ENCODE measurements at regions of chr4 and their contacts with region 1.

Region 1: GRCh38 chr4:56799824-56800756 is 21.4 kb downstream of the SPINK2 start:
- DNase-seq: peak; percentile 87 to 90
- H3K4me3 ChIP-seq: peak overlapping the region; percentile 3 to 89 (median 38)
- H3K27ac ChIP-seq: peak overlapping the region; percentile 66 to 83 (median 74)
- H3K4me1 ChIP-seq: peaks cover 0 to 3% of the 10 kb centered on the region in 2 donors
- H3K27me3 ChIP-seq: no peaks in the 10 kb centered on the region
- CTCF ChIP-seq: peak; percentile 58 to 98 (median 90)
- POLR2A ChIP-seq: no peak

Region 2: GRCh38 chr4:56575820-56576429 is 224.2 kb before region 1 on chr4:
- intact Hi-C with region 1: loop called (anchors 5 kb)
- DNase-seq: no peak
- H3K4me3 ChIP-seq: no peak overlapping the region
- H3K27ac ChIP-seq: no peak overlapping the region
- H3K4me1 ChIP-seq: no peaks in the 10 kb centered on the region
- H3K27me3 ChIP-seq: no peaks in the 10 kb centered on the region
- CTCF ChIP-seq: peak in 4 of 6 experiments; percentile 46 to 68 (median 60)
- POLR2A ChIP-seq: no peak

Region 3: DNA sequence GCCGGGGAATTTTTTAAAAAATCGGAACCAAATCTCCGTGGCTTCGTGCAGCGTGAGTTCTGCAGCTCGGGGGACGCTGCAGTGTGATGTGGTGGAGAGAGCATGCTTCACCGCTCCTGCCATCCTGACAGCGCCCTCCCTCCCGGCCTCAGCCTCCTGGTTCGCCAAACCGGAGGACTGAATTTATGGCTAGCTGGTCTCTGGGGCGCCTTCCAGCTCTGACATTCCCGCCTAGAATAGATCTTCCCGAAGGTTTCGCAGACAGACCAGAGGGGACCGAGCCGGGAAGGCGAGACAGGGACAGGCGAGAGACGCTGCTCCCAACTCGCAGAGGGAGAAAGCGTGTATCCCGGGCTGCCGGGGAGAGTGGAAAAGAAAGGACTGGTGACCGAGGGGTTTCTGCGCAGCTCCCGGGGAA is 144.9 kb before region 1 on chr4:
- intact Hi-C with region 1: loop called (anchors 10 kb)
- DNase-seq: peak; percentile 35 to 55
- H3K4me3 ChIP-seq: peak overlapping the region in 1 of 3 donors; percentile 45
- H3K27ac ChIP-seq: peak overlapping the region in 2 of 3 donors; percentile 3 to 59
- H3K4me1 ChIP-seq: peaks cover 41 to 71% of the 10 kb centered on the region in 2 donors
- H3K27me3 ChIP-seq: no peaks in the 10 kb centered on the region
- CTCF ChIP-seq: no peak
- POLR2A ChIP-seq: no peak